Mammary epithelial cell (primary cell): ENCODE measurements at regions of chr9 and their contacts with region 1.

Region 1: GRCh38 chr9:121059998-121060636 is 10.0 kb upstream of the C5 start:
- DNase-seq: peak; percentile 46
- H3K4me3 ChIP-seq: no peak overlapping the region
- H3K27ac ChIP-seq: no peak overlapping the region
- H3K4me1 ChIP-seq: no peaks in the 10 kb centered on the region
- H3K27me3 ChIP-seq: no peaks in the 10 kb centered on the region
- CTCF ChIP-seq: peak; percentile 72 to 73

Region 2: DNA sequence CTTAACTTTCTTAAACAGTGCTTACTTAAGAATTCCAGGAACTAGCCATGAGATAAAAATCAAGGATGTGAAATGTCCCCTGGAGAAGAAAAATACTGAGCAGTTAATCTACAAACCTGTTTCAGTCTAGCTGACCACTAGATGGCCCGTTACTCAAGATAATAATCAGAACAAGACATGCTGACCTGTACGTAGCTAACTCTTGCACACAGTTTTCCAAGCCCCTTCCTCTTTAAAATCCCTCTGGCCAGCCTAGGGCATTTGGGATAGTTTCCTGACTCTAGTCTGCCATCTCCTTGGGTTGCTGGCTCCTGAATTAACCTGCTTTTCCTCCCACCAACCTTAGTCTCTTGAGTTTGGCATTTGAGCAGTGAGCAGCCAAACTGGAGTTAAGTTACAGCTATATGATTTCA is 74.3 kb before region 1 on chr9:
- CTCF ChIA-PET with region 1: interaction called, 5 read pairs
- dilution Hi-C with region 1: no loop called
- in situ Hi-C with region 1: loop called in 1 of 2 experiments (anchors 5 kb)
- intact Hi-C with region 1: loop called (anchors 1 kb)
- DNase-seq: peak; percentile 34
- H3K4me3 ChIP-seq: no peak overlapping the region
- H3K27ac ChIP-seq: no peak overlapping the region
- H3K4me1 ChIP-seq: no peaks in the 10 kb centered on the region
- H3K27me3 ChIP-seq: no peaks in the 10 kb centered on the region
- CTCF ChIP-seq: peak; percentile 56 to 67

Region 3: DNA sequence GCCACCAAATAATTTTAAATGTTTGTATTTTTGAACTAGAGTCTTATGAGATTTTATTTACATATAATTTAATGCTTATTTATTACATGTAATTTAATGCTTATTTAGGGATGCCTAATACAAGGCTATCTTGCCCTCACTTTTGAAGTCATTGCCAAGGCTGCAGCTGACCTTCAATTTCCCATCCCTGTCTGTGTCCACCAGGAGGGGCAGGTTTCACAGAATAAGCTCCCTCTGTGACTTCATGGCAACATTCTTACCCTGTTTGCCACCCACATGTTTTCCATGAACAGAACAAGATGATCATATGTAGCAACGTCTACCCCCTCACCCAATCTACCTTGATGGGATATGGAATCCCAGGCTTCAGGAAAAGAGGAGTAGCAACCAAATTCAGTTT is 37.1 kb before region 1 on chr9:
- CTCF ChIA-PET with region 1: no interaction called
- dilution Hi-C with region 1: no loop called
- in situ Hi-C with region 1: no loop called
- intact Hi-C with region 1: loop called (anchors 5 kb)
- DNase-seq: peak; percentile 5
- H3K4me3 ChIP-seq: no peak overlapping the region
- H3K27ac ChIP-seq: no peak overlapping the region
- H3K4me1 ChIP-seq: no peaks in the 10 kb centered on the region
- H3K27me3 ChIP-seq: no peaks in the 10 kb centered on the region
- CTCF ChIP-seq: no peak

Region 4: DNA sequence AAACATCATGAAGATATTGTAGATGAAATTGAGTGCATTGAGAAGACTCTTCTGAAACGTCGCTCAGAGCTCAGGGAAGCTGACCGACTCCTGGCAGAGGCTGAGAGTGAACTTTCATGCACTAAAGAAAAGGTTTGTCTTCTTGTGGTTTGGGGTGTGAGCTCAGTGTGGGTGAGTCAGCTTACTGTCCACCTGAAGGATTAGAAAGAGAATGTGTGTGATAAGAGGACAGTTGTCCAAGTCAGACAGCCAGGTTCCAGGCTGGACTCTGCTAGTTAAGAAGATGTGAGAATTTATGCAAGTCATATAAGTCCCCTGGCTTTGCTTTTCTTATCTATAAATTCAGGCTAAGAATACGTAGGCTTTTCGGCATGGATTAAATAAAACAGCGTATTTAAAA is 94.7 kb after region 1 on chr9:
- CTCF ChIA-PET with region 1: no interaction called
- dilution Hi-C with region 1: no loop called
- in situ Hi-C with region 1: no loop called
- intact Hi-C with region 1: no loop called
- DNase-seq: peak; percentile 84
- H3K4me3 ChIP-seq: no peak overlapping the region
- H3K27ac ChIP-seq: peak overlapping the region; percentile 40
- H3K4me1 ChIP-seq: peaks cover 39% of the 10 kb centered on the region
- H3K27me3 ChIP-seq: no peaks in the 10 kb centered on the region
- CTCF ChIP-seq: no peak